Panc1 (cell line): ENCODE measurements at regions of chr11 and their contacts with region 1.

Region 1: DNA sequence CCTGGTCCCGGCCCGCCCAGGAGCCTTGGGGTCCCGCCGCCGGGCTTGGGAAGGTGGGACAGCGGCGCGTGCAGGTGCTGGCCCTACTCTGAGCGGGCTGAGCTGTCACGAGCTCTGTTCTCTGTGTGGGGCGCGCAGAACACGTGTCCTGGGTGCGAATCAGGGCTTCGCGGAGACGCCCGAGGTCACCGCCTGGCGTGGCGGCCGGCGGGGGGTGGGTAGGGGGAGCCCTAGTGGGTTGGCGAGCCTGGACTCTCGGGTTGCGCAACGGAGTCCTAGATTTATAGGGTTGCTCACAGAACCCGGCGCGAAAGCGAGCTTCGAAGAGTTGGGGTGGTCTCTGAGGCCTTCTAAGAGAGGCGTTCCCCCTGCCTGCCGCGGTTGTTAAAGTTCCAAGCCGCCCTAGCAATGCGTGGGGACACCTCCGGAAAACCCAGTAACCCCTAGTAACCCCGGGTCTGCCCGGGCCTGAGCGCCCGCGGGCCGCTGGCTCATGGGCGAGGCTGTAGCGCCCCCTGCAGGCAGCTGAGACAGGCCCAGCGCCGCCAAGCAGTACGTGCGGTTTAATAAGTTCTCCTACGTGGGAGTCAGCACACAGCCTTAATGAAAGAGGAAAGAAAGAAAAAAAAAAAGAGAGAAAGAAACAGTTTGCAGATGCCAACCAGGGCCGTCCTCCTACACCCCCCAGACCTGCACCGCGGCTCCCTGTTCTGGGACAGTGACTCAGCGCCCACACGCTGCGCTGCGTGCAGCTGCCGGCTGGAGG is 2.8 kb downstream of the ADM start:
- DNase-seq: no peak
- ATAC-seq: peak; percentile 46
- H3K4me3 ChIP-seq: peak overlapping the region; percentile 64 to 90
- H3K27ac ChIP-seq: peak overlapping the region; percentile 100
- H3K4me1 ChIP-seq: peaks cover 28% of the 10 kb centered on the region
- H3K27me3 ChIP-seq: no peaks in the 10 kb centered on the region
- CTCF ChIP-seq: peak; percentile 100

Region 2: DNA sequence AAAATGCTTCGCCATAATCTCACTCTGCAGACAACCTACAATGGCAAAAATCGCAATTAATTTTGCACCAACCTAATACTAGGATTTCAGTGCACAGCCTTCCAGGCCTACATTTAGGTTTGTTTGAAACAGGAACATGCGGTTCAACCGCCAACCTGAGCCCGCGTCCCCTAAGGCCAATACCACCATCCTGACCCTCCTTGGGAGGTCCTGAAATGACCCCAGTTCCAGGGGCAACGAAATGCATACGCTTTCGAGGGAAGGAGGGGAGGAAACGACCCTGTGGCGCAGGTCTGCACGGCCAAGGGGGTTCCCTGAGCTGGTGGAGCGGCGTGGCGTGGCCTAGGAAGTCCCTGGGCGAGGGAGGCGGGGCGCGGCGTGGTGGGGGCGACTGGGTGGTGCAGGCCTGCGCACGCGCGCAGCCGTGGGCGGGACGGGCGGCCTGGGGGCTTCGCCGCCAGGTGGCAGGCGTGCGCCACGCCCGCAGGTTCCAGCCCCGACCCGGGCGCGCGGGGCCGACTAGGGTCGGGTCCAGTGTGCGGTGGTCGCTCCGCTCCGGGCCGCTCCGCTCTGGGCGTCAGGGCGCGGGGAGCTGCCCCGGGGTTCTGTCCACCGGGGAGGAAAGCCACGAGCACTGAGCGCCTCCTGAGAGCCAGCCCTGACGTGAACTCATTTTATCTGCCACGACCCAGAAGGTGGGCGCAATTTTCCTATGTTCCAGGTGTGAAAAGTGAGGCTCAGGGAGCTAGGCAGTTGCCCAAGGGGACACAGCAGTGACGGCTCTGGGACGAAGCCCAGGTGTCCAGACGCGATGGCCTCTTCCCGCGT is 549.6 kb before region 1 on chr11:
- CTCF ChIA-PET with region 1: interaction called, 19 read pairs
- POLR2A ChIA-PET with region 1: interaction called, 4 read pairs
- in situ Hi-C with region 1: no loop called
- intact Hi-C with region 1: loop called (anchors 5 kb)
- DNase-seq: peak; percentile 38
- ATAC-seq: peak; percentile 66
- H3K4me3 ChIP-seq: peak overlapping the region; percentile 51 to 81
- H3K27ac ChIP-seq: peak overlapping the region; percentile 100
- H3K4me1 ChIP-seq: peaks cover 85% of the 10 kb centered on the region
- H3K27me3 ChIP-seq: no peaks in the 10 kb centered on the region
- CTCF ChIP-seq: peak; percentile 100

Region 3: GRCh38 chr11:9906043-9906791 is 401.4 kb before region 1 on chr11:
- CTCF ChIA-PET with region 1: interaction called, 4 read pairs
- POLR2A ChIA-PET with region 1: interaction called, 5 read pairs
- in situ Hi-C with region 1: no loop called
- intact Hi-C with region 1: loop called (anchors 5 kb)
- DNase-seq: peak; percentile 81
- ATAC-seq: peak; percentile 97
- H3K4me3 ChIP-seq: no peak overlapping the region; a peak in 1 of 4 replicates
- H3K27ac ChIP-seq: peak overlapping the region; percentile 100
- H3K4me1 ChIP-seq: peaks cover 29% of the 10 kb centered on the region
- H3K27me3 ChIP-seq: no peaks in the 10 kb centered on the region
- CTCF ChIP-seq: no peak

Region 4: GRCh38 chr11:10181811-10182210 is 125.8 kb before region 1 on chr11:
- CTCF ChIA-PET with region 1: interaction called, 13 read pairs
- POLR2A ChIA-PET with region 1: interaction called, 5 read pairs
- in situ Hi-C with region 1: no loop called
- intact Hi-C with region 1: no loop called
- DNase-seq: peak; percentile 17
- ATAC-seq: no peak; the same call in 1 of the 2 replicates
- H3K4me3 ChIP-seq: no peak overlapping the region
- H3K27ac ChIP-seq: no peak overlapping the region
- H3K4me1 ChIP-seq: no peaks in the 10 kb centered on the region
- H3K27me3 ChIP-seq: no peaks in the 10 kb centered on the region
- CTCF ChIP-seq: peak; percentile 53; the same call in 1 of the 2 replicates

Region 5: DNA sequence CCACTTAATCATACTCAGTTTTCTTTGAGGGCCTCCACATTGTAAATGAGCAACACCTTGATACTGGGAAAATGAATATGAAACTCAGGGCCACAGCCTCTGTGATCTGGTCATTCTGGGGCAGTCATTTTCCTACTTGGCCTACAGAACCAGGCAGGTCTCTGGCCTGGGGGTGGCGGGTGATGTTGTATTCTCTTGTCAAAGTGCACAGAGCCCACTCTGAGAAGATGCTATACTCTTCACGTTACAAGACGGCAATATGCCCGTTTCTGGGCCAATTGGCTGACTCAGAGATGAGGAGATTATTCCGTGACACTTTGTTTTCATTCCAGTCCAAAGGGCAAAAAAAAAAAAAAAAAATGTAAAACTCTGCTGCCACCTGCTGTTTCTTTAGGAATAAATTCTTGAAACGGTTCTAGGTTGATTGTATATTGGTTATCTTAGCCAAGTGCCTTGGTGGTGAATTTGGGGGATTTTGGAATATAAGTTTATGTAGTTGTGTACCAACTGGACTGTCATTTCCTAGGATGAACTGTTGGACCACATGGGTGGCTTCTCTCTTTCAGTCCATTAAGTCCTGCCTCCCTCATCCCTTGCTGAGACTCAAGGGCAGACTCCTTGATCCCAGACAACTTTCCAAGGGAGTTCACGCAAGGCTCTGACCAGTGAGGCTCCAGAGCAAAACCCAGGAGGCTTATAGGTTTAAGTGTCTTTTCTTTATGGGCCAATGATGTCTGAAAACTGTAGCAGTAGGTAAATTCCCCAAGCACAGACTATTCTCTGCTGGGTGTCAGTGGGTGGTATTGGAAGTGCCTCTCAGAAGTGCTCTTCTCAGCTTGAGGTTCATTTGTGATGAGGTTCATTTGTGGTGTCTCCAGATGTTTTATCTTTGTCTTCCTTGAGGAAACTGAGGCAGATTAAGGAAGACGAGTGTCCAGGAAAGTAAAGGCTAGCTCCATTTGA is 15.5 kb after region 1 on chr11:
- CTCF ChIA-PET with region 1: interaction called, 3 read pairs
- POLR2A ChIA-PET with region 1: interaction called, 11 read pairs
- in situ Hi-C with region 1: no loop called
- intact Hi-C with region 1: no loop called
- DNase-seq: peak; percentile 90
- ATAC-seq: peak; percentile 82
- H3K4me3 ChIP-seq: peak overlapping the region in 1 of 2 experiments; percentile 36; a peak in 2 of 4 replicates
- H3K27ac ChIP-seq: peak overlapping the region; percentile 90
- H3K4me1 ChIP-seq: peaks cover 83% of the 10 kb centered on the region
- H3K27me3 ChIP-seq: no peaks in the 10 kb centered on the region
- CTCF ChIP-seq: peak; percentile 83

Region 6: GRCh38 chr11:10355257-10355661 is 47.6 kb after region 1 on chr11:
- CTCF ChIA-PET with region 1: no interaction called
- POLR2A ChIA-PET with region 1: no interaction called
- in situ Hi-C with region 1: no loop called
- intact Hi-C with region 1: no loop called
- DNase-seq: no peak
- ATAC-seq: no peak
- H3K4me3 ChIP-seq: no peak overlapping the region
- H3K27ac ChIP-seq: no peak overlapping the region
- H3K4me1 ChIP-seq: peaks cover 9% of the 10 kb centered on the region
- H3K27me3 ChIP-seq: no peaks in the 10 kb centered on the region
- CTCF ChIP-seq: no peak

Region 7: DNA sequence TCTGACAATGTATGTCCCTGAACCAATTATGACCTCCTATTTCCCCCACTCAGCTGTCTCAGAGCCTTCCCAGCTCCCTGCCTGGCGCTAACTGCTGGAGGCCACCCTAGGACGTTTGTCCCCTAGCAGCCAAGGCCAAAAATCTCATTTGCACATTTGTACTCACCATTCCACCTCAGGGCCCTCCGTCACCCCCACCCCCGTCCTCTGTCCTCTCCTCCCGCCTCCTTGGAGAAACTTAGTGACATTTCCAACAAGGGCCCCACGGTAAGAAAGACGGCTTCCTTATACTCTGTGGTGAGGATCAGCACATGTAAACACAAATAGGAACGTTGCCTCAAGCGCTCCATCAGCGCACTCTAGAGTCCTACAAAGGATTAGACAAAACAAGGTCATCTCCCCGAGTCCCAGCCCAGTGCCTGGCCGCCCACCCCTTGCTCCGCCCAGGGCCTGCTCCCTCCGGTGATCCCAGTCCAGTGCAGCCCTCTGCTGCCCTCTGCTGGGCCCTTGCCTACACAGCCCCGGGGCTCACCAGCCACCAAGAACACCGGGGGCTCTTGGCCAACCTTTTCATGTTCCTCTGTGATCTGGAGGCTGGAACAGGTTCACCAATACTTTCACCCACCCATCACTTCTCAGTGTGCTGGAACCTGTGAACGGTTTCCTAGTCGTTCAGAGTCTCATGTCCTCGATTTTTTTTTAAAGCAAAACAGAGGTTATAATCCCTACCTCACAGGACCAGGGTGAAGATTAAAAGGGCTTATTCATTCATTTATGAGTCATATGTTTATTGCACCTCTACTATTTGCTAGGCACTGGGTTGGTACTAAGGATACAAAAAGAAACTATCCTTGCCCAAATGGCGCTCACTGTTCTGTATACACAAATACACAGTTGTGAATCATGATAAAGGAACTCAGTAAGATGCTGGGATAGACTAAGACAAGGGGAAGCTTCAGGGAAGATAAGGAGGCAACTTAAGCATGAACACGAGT is 428.2 kb after region 1 on chr11:
- CTCF ChIA-PET with region 1: no interaction called
- POLR2A ChIA-PET with region 1: interaction called, 7 read pairs
- in situ Hi-C with region 1: no loop called
- intact Hi-C with region 1: loop called (anchors 5 kb)
- DNase-seq: peak; percentile 97
- ATAC-seq: peak; percentile 99
- H3K4me3 ChIP-seq: peak overlapping the region; percentile 24 to 52
- H3K27ac ChIP-seq: peak overlapping the region; percentile 74
- H3K4me1 ChIP-seq: peaks cover 11% of the 10 kb centered on the region
- H3K27me3 ChIP-seq: no peaks in the 10 kb centered on the region
- CTCF ChIP-seq: peak; percentile 100